ENCODE measurements at regions of chr7 and their contacts with region 1.

Region 1: GRCh38 chr7:35424869-35425495 is 171.1 kb upstream of the TBX20 start:
- DNase-seq: peak; percentile 79
- ATAC-seq: peak; percentile 66

Region 2: DNA sequence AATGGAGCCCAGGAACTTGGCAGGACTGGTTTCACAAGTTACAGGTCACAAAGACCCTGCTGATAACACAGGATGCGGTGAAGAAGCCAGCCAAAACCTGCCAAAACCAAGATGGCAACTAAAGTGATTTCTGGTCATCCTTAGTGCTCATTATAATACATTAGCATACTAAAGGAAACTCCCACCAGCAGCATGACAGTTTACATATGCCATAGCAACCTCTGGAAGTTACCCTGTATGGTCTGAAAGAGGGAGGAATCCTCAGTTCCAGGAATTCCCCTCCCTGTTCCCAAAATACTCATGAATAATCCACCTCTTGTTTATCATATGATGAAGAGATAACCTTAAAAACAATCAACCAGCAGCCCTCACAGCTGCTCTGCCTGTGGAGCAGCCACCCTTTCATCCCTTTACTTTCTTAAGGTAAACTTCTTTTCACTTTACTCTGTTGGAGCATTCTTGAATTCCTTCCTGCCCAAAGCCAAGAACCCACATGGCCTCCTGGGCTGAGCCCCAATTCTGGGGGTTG is 409.6 kb before region 1 on chr7:
- intact Hi-C with region 1: no loop called
- DNase-seq: no peak
- ATAC-seq: no peak

Region 3: DNA sequence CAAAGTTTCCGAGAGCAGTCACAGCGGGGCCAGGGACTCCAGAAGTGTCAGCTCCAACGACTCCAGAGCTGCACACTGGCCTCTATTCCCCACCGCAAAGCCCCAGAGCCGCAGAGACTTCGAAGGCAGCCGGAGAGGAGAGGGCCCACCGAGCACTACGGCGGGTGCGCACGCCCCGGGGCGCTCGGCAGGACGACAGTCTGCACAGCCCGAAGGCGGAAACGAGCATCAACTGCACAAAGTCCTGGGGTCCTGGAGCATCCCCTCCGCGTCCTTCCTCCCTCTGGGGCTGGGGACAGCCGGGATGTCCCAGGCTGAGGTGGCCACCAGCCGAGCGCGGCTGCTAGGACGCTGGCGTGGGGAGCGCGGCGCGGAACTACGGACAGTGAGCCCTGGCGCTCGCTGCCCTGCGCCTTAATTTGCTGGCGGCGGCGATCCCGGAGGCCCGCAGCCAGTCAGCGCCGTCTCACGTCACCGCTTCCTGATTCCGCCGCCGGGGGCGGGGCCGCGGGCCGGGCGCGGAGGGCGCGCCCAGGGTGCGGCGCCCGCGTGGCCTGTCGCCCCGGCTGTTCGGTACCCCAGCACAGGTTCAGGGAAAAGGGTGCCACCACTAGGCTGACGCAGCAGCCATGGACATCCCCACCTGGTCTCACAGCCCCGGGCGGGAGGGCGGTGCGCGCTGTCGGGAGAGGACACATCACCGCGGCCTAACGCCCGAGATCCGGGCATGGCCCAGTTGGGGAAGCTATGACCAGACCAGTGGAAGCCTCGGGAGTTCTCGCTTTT is 171.1 kb before region 1 on chr7 and contains the start of gene TBX20:
- intact Hi-C with region 1: loop called (anchors 10 kb)
- DNase-seq: peak; percentile 94
- ATAC-seq: peak; percentile 78
- total RNA-seq, gene TBX20: 193 TPM

Region 4: GRCh38 chr7:35519971-35520809 is 95.2 kb after region 1 on chr7:
- intact Hi-C with region 1: loop called (anchors 5 kb)
- DNase-seq: peak; percentile 88
- ATAC-seq: peak; percentile 95

Region 5: DNA sequence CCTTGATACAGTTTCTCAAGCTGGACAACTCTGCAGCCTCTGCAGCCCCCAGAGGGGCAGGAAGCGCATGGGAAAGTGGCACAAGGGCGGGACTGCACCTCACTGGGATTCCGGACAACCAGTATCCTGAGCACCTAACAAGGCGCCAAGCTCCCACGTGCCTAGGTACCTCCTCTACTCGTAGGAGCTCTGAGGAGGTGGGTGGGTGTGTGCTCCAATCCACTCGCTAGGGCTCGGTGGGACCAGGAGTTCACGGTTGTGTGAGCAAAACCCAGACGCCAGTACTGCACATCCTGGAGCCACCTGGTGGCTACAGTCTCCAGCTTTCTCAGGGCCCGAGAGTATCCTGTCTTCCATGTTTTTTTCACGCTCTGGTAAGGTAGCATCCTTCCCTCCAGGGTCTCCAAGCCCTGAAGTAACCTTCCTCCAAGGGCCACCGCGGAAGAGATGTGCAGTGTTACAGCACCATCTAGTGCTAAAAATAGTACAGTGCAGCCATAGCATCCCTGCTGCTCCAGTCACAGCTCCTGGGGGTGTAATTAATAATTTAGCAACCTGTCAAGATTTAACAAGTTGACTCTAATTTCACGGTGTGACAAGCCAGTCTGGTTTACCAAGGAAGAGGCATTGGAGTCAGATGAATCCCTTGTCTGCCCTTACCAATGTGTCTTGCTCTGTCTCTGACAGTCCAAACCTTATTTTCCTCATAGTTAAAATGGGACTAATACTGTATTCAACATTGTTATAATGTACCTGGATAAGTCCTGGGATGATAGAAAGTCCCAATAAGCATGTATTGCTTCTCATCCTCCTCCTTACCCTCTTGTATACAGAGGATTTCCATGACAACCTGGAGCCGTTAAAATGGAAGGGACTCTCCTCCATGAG is 199.6 kb after region 1 on chr7:
- intact Hi-C with region 1: loop called (anchors 10 kb)
- DNase-seq: peak; percentile 34
- ATAC-seq: peak; percentile 89

Measured in left ventricle myocardium superior (tissue), 1 donor.